Activated B cell treated with CpG ODN at 0.5 μM for 24 hours (primary cell): ENCODE measurements at regions of chr3 and their contacts with region 1.

Region 1: GRCh38 chr3:49081429-49081828 is 12.4 kb downstream of the QRICH1 start:
- DNase-seq: no peak
- ATAC-seq: no peak
- H3K4me3 Mint-ChIP-seq: no peak overlapping the region
- H3K27ac Mint-ChIP-seq: no peak overlapping the region
- H3K4me1 Mint-ChIP-seq: peaks cover 12% of the 10 kb centered on the region
- H3K27me3 Mint-ChIP-seq: no peaks in the 10 kb centered on the region
- CTCF ChIP-seq: no peak

Region 2: GRCh38 chr3:48896936-48897335 is 184.5 kb before region 1 on chr3:
- CTCF ChIA-PET with region 1: no interaction called
- POLR2A ChIA-PET with region 1: no interaction called
- intact Hi-C with region 1: no loop called
- DNase-seq: no peak
- ATAC-seq: no peak
- H3K4me3 Mint-ChIP-seq: no peak overlapping the region
- H3K27ac Mint-ChIP-seq: no peak overlapping the region
- H3K4me1 Mint-ChIP-seq: peaks cover 30% of the 10 kb centered on the region
- H3K27me3 Mint-ChIP-seq: no peaks in the 10 kb centered on the region
- CTCF ChIP-seq: no peak

Region 3: DNA sequence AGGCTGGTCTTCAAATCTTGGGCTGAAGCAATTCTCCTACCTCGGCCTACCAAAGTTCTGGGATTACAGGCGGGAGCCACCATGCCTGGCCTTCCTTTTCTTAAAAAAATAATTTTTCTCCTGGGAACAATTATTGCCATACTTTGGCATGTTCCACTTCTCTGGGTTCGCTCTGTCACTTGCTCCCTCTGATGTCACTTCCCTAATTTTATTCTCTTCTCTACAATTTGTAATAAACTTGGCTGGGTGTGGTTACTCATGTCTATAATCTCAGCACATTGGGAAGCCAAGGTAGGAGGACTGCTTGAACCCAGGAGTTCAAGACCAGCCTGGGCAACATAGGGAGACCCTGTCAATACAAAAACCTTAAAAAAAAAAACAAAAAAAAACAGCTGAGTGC is 46.1 kb before region 1 on chr3:
- CTCF ChIA-PET with region 1: no interaction called
- POLR2A ChIA-PET with region 1: no interaction called
- intact Hi-C with region 1: loop called (anchors 5 kb)
- DNase-seq: no peak
- ATAC-seq: no peak
- H3K4me3 Mint-ChIP-seq: no peak overlapping the region
- H3K27ac Mint-ChIP-seq: no peak overlapping the region
- H3K4me1 Mint-ChIP-seq: peaks cover 6% of the 10 kb centered on the region
- H3K27me3 Mint-ChIP-seq: no peaks in the 10 kb centered on the region
- CTCF ChIP-seq: no peak

Region 4: DNA sequence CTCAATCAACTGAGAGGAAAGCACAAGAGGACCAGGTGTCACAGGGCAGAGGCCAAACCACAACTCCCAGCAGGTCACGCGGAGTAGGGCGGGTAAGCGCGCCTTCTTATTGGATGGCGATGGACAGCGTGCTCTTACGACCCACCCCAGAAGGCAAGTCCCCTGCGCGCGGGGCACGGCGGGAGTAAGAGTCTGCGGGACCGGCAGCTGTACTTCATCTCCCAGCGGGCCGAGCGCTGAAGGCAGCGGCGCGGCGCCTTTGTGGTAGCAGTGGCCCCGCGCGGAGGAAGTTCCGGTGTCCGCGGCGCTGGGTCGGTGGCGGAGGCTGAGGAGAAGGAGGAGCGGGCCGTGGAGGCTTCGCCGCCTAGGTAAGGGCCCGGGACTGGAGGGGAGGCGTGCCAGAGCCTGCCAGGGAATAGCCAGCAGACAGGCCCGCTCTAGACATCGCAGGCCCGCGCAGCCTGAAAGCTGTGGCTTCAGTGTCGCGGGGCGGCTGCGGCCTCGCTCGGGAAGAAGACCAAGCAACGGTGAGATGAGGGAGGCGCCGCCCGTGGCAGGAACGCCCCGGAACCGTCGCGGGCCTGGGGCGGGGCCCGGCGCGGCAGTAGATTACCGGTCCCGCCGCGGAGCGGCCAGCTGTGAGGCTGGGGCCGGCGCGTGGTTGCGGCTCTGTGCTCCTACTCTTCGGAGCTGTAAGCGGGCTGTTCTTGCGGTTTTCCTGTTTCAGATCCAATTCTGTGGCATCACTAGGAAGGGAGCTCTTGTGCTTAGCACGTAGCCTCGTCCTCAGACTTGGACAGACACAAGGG is 858.6 kb after region 1 on chr3 and contains the start of gene RBM6:
- CTCF ChIA-PET with region 1: no interaction called
- POLR2A ChIA-PET with region 1: no interaction called
- intact Hi-C with region 1: no loop called
- DNase-seq: peak; percentile 89
- ATAC-seq: peak; percentile 93
- H3K4me3 Mint-ChIP-seq: peak within 1 kb of the TSS; percentile 98
- H3K27ac Mint-ChIP-seq: peak within 1 kb of the TSS; percentile 97
- H3K4me1 Mint-ChIP-seq: peaks cover 43% of the 10 kb centered on the region
- H3K27me3 Mint-ChIP-seq: no peaks in the 10 kb centered on the region
- CTCF ChIP-seq: no peak
- total RNA-seq, gene RBM6: 160 and 172 TPM in 2 replicates